ENCODE measurements at regions of chr2 and their contacts with region 1.

Region 1: DNA sequence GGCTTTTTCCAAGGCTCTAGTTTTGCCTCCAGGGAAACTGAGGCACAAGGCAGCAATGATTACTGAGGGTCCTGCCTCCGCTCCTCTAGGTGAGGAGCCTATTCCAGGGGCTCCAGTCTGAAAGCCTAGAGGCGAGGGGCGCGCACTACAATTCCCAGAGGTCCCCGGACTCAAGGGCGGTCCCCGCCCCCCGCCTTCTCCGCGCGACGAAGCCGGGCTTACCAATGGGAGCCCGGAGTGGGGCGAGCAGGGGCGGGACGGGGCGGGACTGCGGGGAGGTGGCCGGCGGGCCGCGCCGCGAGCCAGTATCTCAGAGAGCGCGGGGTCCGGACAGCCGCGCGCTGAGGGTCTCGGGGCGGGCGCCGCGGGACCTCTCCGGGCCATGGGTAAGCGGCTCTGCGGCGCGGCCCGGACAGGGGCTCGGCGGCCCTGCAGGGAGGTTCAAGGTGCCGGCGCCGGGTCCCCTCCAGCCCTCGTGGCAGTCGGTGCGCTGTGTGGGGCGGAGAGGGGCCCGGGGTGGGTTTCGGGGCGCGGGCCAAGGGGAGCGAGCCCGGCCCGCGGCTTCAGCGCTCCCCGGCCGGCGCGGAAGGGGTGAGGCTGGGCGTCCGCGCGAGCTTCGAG is at the start of gene ARID5A:
- DNase-seq: peak; percentile 95 to 96
- ATAC-seq: peak; percentile 69 to 88 (median 76)
- H3K4me3 ChIP-seq: peak within 1 kb of the TSS; percentile 73 to 99 (median 96)
- H3K27ac ChIP-seq: peak within 1 kb of the TSS; percentile 68 to 100 (median 97)
- H3K4me1 ChIP-seq: peaks cover 29 to 89% (median 76%) of the 10 kb centered on the region in 9 donors
- H3K27me3 ChIP-seq: no peaks in the 10 kb centered on the region
- CTCF ChIP-seq: peak; percentile 13 to 59 (median 42)
- total RNA-seq, gene ARID5A: 12.0 to 121 (median 43.5) TPM

Region 2: DNA sequence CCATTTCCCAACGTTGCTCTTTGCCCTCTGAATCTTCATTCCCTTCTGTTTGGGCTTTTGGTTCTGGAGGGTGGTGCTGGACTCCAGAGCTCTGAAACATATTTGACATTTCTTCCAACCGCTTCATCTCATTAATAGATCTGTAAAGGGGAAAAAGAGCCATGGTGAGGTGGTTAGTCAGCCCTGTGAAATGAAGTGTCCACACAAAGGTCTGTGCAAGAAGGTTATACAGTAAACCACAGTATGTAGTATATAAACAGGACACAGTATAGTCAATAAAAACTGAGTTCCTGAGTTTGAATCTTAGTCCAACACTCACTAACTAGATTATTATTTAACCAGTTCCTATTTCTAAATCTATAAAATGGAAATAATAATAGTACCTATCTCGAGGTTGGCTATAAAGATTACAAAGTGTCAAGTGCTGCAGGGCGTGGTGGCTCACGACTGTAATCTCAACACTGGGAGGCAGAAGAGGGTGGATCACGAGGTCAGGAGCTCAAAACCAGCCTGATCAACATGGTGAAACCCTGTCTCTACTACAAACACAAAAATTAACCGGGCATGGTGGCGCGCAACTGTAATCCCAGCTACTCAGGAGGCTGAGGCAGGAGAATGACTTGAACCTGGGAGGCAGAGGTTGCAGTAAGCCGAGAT is 341.0 kb before region 1 on chr2:
- intact Hi-C with region 1: loop called in 1 of 10 experiments (anchors 10 kb)
- DNase-seq: no peak
- ATAC-seq: no peak
- H3K4me3 ChIP-seq: no peak overlapping the region
- H3K27ac ChIP-seq: peak overlapping the region in 3 of 10 donors; percentile 1 to 45 (median 24)
- H3K4me1 ChIP-seq: peaks cover 0 to 86% (median 44%) of the 10 kb centered on the region in 9 donors
- H3K27me3 ChIP-seq: no peaks in the 10 kb centered on the region
- CTCF ChIP-seq: peak in 1 of 9 donors; percentile 13

Region 3: GRCh38 chr2:96427917-96428316 is 108.6 kb before region 1 on chr2:
- intact Hi-C with region 1: no loop called
- DNase-seq: no peak
- ATAC-seq: peak in 1 of 8 donors; percentile 39
- H3K4me3 ChIP-seq: no peak overlapping the region
- H3K27ac ChIP-seq: no peak overlapping the region
- H3K4me1 ChIP-seq: peaks cover 0 to 23% (median 5%) of the 10 kb centered on the region in 9 donors
- H3K27me3 ChIP-seq: no peaks in the 10 kb centered on the region
- CTCF ChIP-seq: no peak

Region 4: DNA sequence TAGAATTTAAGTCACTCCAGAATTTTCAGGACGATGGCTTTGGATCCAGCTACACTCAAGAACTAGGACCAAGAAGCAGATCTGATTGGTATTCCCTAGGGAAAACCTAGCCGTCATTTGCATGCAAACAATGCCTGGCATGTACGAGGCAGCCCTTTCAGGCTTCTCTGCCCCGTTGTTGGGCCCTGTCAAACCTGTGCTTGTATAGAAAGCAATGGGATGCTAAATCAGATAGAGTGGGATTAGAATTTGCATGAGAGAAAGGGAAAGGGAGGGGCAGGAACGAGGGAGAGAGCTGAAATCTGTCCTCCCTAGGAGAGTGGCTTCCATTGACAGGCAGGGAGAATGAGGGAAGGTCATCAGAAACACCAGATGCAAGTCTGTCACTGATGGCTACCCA is 28.6 kb after region 1 on chr2:
- intact Hi-C with region 1: no loop called
- DNase-seq: no peak
- ATAC-seq: no peak
- H3K4me3 ChIP-seq: no peak overlapping the region
- H3K27ac ChIP-seq: no peak overlapping the region
- H3K4me1 ChIP-seq: no peaks in the 10 kb centered on the region
- H3K27me3 ChIP-seq: no peaks in the 10 kb centered on the region
- CTCF ChIP-seq: no peak

Measured in heart right ventricle (tissue), 16 donors.